GM10248 (cell line): ENCODE measurements at regions of chr1 and their contacts with region 1.

Region 1: GRCh38 chr1:175154629-175155472 is 37.7 kb downstream of the KIAA0040 start:
- DNase-seq: peak; percentile 70
- CTCF ChIP-seq: peak; percentile 88

Region 2: DNA sequence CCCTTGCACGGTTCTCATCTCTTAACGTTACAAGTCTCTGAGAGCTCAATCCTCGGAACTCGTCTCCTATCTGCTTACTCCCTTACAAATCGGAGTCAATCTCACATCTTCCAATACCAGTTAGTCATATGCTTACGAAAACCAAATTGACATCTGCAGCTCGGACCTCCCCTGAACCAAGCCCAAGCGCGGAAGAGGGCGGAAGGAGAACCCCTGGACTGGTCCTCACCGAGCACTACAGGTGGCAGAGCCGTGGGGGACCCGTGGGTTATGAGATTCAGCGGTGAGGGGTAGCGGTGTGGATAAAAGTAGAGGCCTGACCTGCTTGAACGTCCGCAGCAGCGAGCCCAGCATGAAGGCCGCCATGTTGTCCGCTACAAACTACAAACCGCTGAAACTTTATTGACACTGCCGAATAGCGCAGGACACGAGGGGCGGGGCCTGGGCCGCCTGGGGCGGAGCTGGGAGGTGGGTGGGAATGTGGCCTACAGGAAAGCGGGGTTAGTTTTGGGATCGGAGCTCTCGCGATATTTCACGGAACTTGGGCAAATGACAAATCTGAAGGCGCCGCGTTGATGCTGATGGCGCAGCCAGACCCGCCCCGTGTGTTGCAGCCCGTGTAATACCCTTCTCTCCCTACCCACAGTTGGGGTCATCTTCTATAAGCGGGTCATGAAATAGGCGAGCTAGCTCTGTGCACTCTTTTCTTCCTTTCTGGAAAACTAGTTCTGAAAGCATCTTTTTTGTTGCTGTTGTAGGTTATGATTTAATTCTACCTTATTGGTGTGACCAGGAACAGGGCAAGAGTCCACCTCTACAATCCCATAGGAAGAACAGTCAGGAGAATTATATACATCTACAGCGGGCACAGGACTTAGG is 131.6 kb before region 1 on chr1 and contains the start of gene MRPS14:
- CTCF ChIA-PET with region 1: interaction called, 15 read pairs
- POLR2A ChIA-PET with region 1: no interaction called
- DNase-seq: peak; percentile 96
- CTCF ChIP-seq: no peak

Region 3: GRCh38 chr1:175169305-175170018 is 14.6 kb after region 1 on chr1:
- CTCF ChIA-PET with region 1: interaction called, 51 read pairs
- POLR2A ChIA-PET with region 1: interaction called, 3 read pairs
- DNase-seq: no peak
- CTCF ChIP-seq: no peak

Region 4: GRCh38 chr1:175179845-175180590 is 25.2 kb after region 1 on chr1:
- CTCF ChIA-PET with region 1: interaction called, 51 read pairs
- POLR2A ChIA-PET with region 1: no interaction called
- DNase-seq: no peak
- CTCF ChIP-seq: no peak

Region 5: DNA sequence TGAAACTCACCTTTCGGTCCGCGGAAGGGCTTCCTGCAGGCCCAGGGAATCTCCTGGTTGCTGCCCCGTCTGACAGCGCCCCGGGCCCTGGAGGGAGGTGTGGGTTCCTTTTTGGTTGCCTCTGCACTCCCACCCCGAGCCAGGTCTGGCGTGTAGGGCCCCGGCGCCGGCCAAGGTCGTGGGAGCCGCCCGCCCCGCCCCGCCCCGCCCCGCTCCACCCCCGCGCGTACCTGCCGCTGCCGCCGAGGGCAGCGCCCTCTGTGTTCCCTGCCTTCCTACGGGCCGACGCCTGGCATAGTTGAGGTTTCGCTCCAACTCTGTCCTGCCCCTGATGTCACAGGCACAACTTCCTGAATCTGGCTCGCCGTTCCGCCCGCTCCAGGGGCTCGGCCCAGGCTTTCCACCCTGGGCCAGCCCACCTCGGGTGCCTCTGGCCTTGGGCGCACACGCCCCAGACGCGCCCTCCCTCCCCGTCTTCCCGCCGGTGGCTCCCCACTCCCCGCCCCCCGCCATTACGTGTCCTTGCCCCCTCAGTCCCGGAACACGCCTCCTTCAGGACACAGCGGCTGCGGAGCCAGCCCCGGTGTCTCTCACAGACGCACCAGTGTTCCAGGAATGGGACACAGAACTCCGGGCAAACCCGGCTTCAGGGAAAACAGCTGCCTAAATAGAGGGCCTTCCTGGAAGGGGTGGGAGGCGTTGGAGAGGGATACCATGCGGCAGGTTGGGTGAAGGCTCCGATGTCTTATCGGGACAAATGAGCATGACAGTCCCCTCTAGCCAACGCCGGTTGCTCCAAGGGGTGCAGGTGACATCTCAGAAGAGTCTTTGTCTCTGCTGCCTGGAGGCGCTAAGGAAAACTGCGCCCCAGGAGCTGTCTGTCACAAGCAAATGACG is 38.0 kb after region 1 on chr1 and contains the start of gene KIAA0040:
- CTCF ChIA-PET with region 1: interaction called, 58 read pairs
- POLR2A ChIA-PET with region 1: no interaction called
- DNase-seq: peak; percentile 77
- CTCF ChIP-seq: peak; percentile 46

Region 6: DNA sequence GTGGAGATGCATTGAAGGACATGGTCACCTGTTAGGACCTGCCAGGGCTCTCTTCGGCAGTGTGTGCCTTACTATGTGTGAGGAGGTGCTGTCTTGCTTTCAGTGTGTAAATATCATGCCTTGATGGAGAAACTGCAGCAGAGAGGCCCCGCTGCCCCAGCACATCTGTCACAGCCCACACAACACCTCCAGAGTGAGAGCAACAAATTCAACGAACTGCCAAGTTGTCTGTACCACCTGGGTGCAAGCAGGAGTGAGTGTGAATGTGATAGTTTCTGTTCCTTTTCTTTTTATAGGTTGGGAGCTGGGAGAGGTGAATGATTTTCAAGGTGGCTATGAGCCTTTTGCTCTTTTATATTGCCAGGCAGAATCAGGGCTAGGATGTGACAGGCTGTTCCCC is 152.3 kb after region 1 on chr1:
- CTCF ChIA-PET with region 1: interaction called, 30 read pairs
- POLR2A ChIA-PET with region 1: no interaction called
- DNase-seq: peak; percentile 44
- CTCF ChIP-seq: no peak

Region 7: GRCh38 chr1:175331891-175332290 is 177.0 kb after region 1 on chr1:
- CTCF ChIA-PET with region 1: interaction called, 23 read pairs
- POLR2A ChIA-PET with region 1: no interaction called
- DNase-seq: no peak
- CTCF ChIP-seq: no peak